ENCODE measurements at regions of chr2 and their contacts with region 1.

Region 1: GRCh38 chr2:99489761-99490622 is at the start of gene REV1:
- H3K4me3 Mint-ChIP-seq: peak within 1 kb of the TSS; percentile 96
- H3K27ac Mint-ChIP-seq: peak within 1 kb of the TSS; percentile 97
- H3K4me1 Mint-ChIP-seq: peaks cover 19% of the 10 kb centered on the region
- H3K27me3 Mint-ChIP-seq: peaks cover 8% of the 10 kb centered on the region

Region 2: DNA sequence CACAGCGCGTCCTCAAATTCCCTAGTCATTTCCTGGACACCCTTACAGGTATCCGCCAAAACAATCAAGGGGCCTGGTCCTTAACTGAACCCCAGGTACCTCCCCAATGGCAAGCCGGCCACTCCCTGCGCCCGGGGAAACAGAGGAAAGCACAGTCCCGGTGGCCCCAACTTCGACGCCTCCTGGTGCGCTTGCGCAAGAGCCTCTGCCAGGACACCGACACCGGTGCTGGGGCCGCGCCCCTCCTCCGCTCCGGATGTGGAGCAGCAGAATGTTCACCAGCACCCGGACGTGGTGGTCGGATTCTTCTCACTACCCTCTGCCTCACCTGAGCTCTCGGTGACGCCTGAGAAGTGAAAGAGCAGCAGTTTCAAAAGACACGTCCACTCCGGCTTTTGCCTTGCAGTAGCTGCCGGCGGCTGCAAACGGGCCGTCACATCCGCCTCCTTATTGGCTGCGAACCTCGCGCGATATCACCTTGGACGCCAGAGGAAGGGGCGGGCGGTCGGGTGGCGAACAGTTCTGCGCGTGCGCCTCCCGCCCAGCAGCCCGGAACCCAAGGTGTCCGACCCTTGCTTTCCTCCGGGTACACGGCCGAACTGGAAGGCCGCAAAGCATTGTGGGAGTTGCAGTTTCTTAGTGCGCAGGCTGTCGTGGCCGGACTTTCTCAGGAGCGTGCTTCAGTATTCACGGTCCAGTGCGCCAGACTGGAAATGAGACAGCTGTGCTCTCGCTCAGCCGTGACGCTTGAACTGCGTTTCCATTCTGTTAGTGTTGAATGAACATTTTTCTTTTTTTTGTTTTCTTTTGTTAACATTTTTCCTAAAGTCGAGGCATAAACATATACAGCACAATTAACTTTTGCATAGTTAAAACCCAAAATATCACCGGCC is 153.8 kb before region 1 on chr2 and contains the start of gene TXNDC9:
- intact Hi-C with region 1: loop called (anchors 1 kb)
- H3K4me3 Mint-ChIP-seq: no peak within 1 kb of the TSS
- H3K27ac Mint-ChIP-seq: no peak within 1 kb of the TSS
- H3K4me1 Mint-ChIP-seq: peaks cover 23% of the 10 kb centered on the region
- H3K27me3 Mint-ChIP-seq: no peaks in the 10 kb centered on the region

Region 3: DNA sequence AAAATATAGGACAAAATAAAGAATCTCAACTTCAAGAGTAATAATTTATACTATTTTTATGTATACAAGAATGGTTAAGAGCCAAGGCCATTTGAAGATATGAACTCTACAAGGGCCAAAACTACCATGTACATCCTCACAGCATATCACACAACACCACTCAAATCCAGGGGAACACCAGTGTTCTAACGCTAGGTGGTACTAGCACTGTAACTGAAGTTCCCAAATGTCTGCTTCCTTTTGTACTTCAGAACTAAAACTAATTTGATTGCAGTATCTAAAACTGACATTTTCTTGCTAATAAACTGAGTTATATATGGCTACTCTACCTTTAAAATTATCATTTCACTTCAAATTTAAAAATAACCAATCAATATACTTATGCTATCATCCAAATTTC is 47.2 kb before region 1 on chr2:
- intact Hi-C with region 1: loop called (anchors 5 kb)
- H3K4me3 Mint-ChIP-seq: no peak overlapping the region
- H3K27ac Mint-ChIP-seq: no peak overlapping the region
- H3K4me1 Mint-ChIP-seq: peaks cover 5% of the 10 kb centered on the region
- H3K27me3 Mint-ChIP-seq: no peaks in the 10 kb centered on the region

Region 4: DNA sequence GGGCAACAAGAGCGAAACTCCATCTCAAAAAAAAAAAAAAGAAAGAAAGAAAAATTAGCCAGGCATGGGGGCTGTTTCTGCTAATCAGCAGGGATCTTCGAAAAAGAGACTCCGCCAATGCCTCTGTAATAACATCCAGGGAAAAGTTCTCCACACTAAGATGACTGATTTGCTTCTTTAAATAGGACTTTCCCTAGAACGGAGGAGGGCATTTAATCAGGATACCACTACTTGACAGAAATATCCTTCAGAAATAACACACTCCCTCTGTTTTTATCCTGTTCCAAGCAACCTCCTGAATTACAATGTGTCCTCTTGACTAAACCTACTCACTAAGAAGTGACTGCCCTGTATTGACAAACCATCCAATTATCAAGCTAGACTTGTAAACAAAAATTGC is 21.8 kb before region 1 on chr2:
- intact Hi-C with region 1: no loop called
- H3K4me3 Mint-ChIP-seq: no peak overlapping the region
- H3K27ac Mint-ChIP-seq: no peak overlapping the region
- H3K4me1 Mint-ChIP-seq: peaks cover 12% of the 10 kb centered on the region
- H3K27me3 Mint-ChIP-seq: no peaks in the 10 kb centered on the region

Region 5: GRCh38 chr2:99648178-99648844 is 158.3 kb after region 1 on chr2:
- intact Hi-C with region 1: no loop called
- H3K4me3 Mint-ChIP-seq: no peak overlapping the region
- H3K27ac Mint-ChIP-seq: no peak overlapping the region
- H3K4me1 Mint-ChIP-seq: peaks cover 16% of the 10 kb centered on the region
- H3K27me3 Mint-ChIP-seq: no peaks in the 10 kb centered on the region

Region 6: DNA sequence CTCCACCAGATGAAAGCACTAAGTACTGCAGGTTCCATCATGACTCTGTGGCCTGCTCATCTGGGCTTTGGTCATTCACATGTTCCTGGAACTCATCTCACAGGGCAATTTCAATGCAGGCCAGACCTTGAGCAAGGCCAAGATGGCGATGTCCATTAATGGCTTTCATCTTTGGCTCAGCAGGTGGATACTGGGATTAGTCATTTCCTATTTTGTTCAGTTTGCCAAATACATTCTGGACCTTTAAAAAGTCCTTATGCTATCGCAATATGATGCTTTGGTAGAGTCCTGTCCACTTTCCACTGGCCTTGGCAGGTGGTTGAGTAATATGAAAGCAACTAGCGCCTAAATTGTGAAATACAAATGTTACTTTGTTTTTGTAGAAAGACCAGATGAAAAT is 169.9 kb after region 1 on chr2:
- intact Hi-C with region 1: no loop called
- H3K4me3 Mint-ChIP-seq: no peak overlapping the region
- H3K27ac Mint-ChIP-seq: no peak overlapping the region
- H3K4me1 Mint-ChIP-seq: peaks cover 17% of the 10 kb centered on the region
- H3K27me3 Mint-ChIP-seq: no peaks in the 10 kb centered on the region

Region 7: DNA sequence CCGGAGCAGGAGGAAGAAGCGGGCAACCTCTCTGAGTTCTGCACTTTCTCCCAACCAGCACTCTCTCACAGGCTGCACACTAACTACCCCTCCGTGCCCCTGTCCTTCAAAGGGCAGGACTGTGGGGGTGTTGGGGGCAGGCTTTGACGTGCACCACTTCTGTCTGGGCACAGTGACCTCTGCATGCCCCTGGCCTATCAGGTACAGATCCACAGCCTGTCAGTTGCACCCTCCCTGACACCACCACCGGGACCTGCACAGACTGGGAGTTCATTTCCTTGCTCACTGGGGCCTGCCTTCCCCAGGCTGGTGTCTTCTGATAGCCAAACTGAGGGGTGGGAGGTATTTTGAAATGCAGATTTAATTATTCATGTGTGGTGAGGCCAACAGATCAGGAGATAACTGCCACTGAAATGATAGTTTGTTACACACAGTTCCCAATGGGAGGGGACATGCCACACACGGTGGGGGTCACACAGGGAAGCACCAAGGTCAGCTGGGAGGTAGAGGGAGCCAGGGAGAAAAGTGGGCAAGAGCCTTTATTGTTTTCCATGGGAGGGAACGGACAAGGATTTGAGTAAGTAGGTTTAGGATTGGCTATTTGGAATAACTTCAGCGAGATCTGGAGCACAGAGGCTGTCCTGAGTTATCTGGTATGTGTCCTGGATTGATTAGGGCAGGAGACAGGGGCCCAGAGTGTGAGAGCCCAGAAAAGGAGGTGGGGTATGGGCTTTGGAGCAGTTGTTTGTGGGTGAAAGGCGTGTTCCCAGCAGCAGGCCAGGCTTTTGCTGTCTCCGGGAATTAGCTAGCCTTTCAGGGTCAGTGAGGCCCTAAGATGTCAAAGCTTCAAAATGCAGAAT is 400.8 kb after region 1 on chr2:
- intact Hi-C with region 1: no loop called
- H3K4me3 Mint-ChIP-seq: no peak overlapping the region
- H3K27ac Mint-ChIP-seq: no peak overlapping the region
- H3K4me1 Mint-ChIP-seq: no peaks in the 10 kb centered on the region
- H3K27me3 Mint-ChIP-seq: no peaks in the 10 kb centered on the region

Measured in dendritic cell treated with granulocyte-macrophage colony-stimulating factor and Interleukin-4, amounts not matched to agents 40 ng/mL and 50 ng/mL, for 4 days (primary cell).